IMR-90 (cell line): ENCODE measurements at regions of chr9 and their contacts with region 1.

Region 1: DNA sequence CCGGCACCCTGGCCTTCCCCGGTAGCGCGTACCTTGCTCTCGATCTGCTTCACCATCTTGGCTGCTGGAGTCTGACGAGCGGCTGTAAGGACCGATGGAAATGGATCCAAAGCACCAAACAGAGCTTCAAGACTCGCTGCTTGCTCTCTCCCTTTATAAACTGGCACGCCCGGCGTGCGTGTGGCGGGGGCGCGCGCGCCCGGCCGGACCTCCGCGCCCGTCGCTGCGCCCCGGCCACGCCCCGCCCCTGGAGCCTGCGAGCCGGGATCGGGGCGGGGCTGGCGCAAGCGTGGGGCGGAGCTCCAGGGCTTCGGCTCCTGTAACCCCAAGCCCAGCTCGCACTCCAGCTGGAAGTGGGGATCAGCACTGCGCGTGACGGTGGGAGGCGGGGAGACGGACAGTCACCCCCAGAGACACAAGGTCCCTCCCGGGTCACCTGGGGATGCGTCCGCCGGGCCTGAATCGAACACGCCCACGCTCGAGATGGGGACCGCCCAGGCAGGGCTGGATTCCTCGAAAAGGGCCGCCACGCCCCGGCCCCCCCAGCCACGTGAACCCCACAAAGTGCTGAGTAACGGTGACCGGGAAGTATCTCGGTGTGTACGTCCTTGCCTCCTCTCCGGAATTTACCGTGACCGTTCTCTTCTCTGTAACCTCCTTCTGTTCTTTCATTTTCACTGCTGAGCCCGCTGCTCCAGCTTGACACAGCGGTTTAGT is at the start of gene TXN:
- DNase-seq: peak; percentile 87
- ATAC-seq: peak; percentile 91
- H3K4me3 ChIP-seq: peak within 1 kb of the TSS; percentile 71
- H3K27ac ChIP-seq: peak within 1 kb of the TSS; percentile 91
- H3K4me1 ChIP-seq: peaks cover 12% of the 10 kb centered on the region
- H3K27me3 ChIP-seq: no peaks in the 10 kb centered on the region
- CTCF ChIP-seq: no peak
- POLR2A ChIP-seq: peak; percentile 98
- RAD21 ChIP-seq: no peak
- total RNA-seq, gene TXN: 277 and 588 TPM in 2 replicates

Region 2: GRCh38 chr9:109859433-109859832 is 397.1 kb before region 1 on chr9:
- CTCF ChIA-PET with region 1: no interaction called
- POLR2A ChIA-PET with region 1: no interaction called
- dilution Hi-C with region 1: no loop called
- in situ Hi-C with region 1: no loop called
- intact Hi-C with region 1: no loop called
- DNase-seq: no peak
- ATAC-seq: no peak
- H3K4me3 ChIP-seq: no peak overlapping the region
- H3K27ac ChIP-seq: no peak overlapping the region
- H3K4me1 ChIP-seq: peaks cover 8% of the 10 kb centered on the region
- H3K27me3 ChIP-seq: no peaks in the 10 kb centered on the region
- CTCF ChIP-seq: peak; percentile 30
- POLR2A ChIP-seq: no peak
- RAD21 ChIP-seq: no peak

Region 3: GRCh38 chr9:110058304-110058953 is 198.1 kb before region 1 on chr9:
- CTCF ChIA-PET with region 1: no interaction called
- POLR2A ChIA-PET with region 1: interaction called, 14 read pairs
- dilution Hi-C with region 1: no loop called
- in situ Hi-C with region 1: no loop called
- intact Hi-C with region 1: no loop called
- DNase-seq: peak; percentile 52
- ATAC-seq: peak; percentile 16
- H3K4me3 ChIP-seq: no peak overlapping the region
- H3K27ac ChIP-seq: no peak overlapping the region; the same call in 1 of the 2 replicates
- H3K4me1 ChIP-seq: peaks cover 8% of the 10 kb centered on the region
- H3K27me3 ChIP-seq: no peaks in the 10 kb centered on the region
- CTCF ChIP-seq: peak; percentile 47
- POLR2A ChIP-seq: no peak
- RAD21 ChIP-seq: peak; percentile 68

Region 4: DNA sequence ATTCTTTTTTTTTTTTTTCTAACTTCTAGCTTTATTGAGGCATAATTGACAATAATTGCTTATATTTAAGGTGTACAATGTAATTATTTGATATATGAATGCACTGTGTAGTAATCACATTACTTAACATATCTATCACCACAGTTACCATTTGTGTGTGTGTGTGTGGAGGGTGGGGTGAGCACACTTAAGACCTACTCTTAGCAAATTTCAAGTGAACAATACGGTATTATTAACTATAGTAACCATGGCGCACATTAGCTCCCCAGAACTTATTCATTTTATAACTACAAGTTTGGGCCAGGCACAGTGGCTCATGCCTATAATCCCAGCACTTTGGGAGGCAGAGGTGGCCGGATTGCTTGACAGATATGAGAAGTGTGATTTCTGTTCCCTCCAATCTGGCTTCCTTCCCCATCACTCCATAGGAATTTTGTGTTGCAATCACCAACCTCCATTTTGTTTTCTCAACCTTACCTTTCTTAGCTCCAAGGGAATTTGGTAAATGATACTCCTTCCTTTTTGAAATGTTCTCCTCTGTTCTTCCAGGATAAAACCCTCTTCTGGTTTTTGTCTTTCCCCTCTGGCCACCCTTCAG is 15.2 kb before region 1 on chr9:
- CTCF ChIA-PET with region 1: no interaction called
- POLR2A ChIA-PET with region 1: no interaction called
- dilution Hi-C with region 1: no loop called
- in situ Hi-C with region 1: no loop called
- intact Hi-C with region 1: no loop called
- DNase-seq: peak; percentile 39
- ATAC-seq: peak; percentile 7; the same call in 1 of the 2 replicates
- H3K4me3 ChIP-seq: no peak overlapping the region
- H3K27ac ChIP-seq: no peak overlapping the region
- H3K4me1 ChIP-seq: peaks cover 3% of the 10 kb centered on the region
- H3K27me3 ChIP-seq: no peaks in the 10 kb centered on the region
- CTCF ChIP-seq: no peak
- POLR2A ChIP-seq: no peak
- RAD21 ChIP-seq: no peak

Region 5: DNA sequence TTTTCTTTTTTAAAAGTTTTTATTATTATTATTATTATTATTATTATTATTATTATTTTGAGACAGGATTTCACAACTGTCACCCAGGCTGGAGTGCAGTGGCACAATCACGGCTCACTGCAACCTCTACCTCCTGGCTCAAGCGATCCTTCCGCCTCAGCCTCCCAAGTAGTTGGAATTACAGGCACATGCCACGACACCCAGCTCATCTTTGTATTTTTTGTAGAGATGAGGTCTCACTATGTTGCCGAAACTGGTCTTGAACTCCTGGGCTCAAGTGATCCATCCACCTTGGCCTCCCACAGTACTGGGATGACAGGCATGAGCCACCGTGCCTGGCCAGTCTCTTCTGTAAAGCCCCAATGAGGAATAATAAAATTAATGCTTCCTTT is 30.7 kb after region 1 on chr9:
- CTCF ChIA-PET with region 1: no interaction called
- POLR2A ChIA-PET with region 1: no interaction called
- dilution Hi-C with region 1: no loop called
- in situ Hi-C with region 1: no loop called
- intact Hi-C with region 1: no loop called
- DNase-seq: no peak
- ATAC-seq: no peak
- H3K4me3 ChIP-seq: no peak overlapping the region
- H3K27ac ChIP-seq: no peak overlapping the region
- H3K4me1 ChIP-seq: no peaks in the 10 kb centered on the region
- H3K27me3 ChIP-seq: peaks cover 5% of the 10 kb centered on the region; the same call in 1 of the 2 replicates
- CTCF ChIP-seq: no peak
- POLR2A ChIP-seq: no peak
- RAD21 ChIP-seq: no peak

Region 6: GRCh38 chr9:110351009-110351467 is 94.5 kb after region 1 on chr9:
- CTCF ChIA-PET with region 1: no interaction called
- POLR2A ChIA-PET with region 1: no interaction called
- dilution Hi-C with region 1: no loop called
- in situ Hi-C with region 1: no loop called
- intact Hi-C with region 1: loop called (anchors 5 kb)
- DNase-seq: peak; percentile 80
- ATAC-seq: peak; percentile 88
- H3K4me3 ChIP-seq: no peak overlapping the region
- H3K27ac ChIP-seq: no peak overlapping the region
- H3K4me1 ChIP-seq: peaks cover 5% of the 10 kb centered on the region
- H3K27me3 ChIP-seq: no peaks in the 10 kb centered on the region; the same call in 1 of the 2 replicates
- CTCF ChIP-seq: no peak
- POLR2A ChIP-seq: no peak
- RAD21 ChIP-seq: no peak

Region 7: DNA sequence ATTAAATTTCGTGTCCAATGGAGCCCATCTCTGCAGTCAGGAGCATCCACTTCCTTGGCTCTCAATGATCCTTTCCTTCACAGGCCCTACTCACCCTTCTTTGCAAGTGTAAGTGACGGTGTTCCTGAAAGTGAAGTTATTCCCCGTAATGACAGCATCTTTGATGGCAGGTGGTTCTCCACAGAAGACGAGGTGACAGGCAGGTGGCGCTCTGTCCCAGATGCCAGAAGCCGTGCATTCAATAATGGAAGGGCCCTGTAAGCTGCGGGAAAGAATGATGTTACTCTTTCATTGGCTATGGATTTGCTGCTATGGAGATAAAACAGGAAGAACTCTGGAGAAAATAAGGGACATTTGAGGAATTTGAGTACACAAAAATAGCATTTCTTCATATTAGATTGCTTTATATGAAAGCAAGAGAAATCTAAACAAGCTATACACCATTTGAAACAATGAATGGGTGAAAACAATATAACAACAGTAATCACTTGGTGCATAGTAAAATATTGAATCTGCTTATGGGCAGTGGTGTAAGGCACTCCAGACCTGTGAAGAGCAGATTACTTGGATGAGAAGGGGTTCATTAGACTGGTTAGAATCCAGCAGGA is 171.1 kb after region 1 on chr9:
- CTCF ChIA-PET with region 1: no interaction called
- POLR2A ChIA-PET with region 1: no interaction called
- dilution Hi-C with region 1: no loop called
- in situ Hi-C with region 1: no loop called
- intact Hi-C with region 1: loop called (anchors 5 kb)
- DNase-seq: peak; percentile 28
- ATAC-seq: peak; percentile 12
- H3K4me3 ChIP-seq: no peak overlapping the region
- H3K27ac ChIP-seq: peak overlapping the region; percentile 91; the same call in 1 of the 2 replicates
- H3K4me1 ChIP-seq: peaks cover 8% of the 10 kb centered on the region
- H3K27me3 ChIP-seq: no peaks in the 10 kb centered on the region
- CTCF ChIP-seq: peak; percentile 47
- POLR2A ChIP-seq: no peak
- RAD21 ChIP-seq: peak; percentile 57

Region 8: GRCh38 chr9:110579034-110579861 is 322.7 kb after region 1 on chr9 and contains the start of gene SVEP1:
- CTCF ChIA-PET with region 1: no interaction called
- POLR2A ChIA-PET with region 1: no interaction called
- dilution Hi-C with region 1: no loop called
- in situ Hi-C with region 1: no loop called
- intact Hi-C with region 1: loop called (anchors 10 kb)
- DNase-seq: peak; percentile 77
- ATAC-seq: peak; percentile 61
- H3K4me3 ChIP-seq: peak within 1 kb of the TSS; percentile 51
- H3K27ac ChIP-seq: peak within 1 kb of the TSS; percentile 85
- H3K4me1 ChIP-seq: peaks cover 15% of the 10 kb centered on the region
- H3K27me3 ChIP-seq: no peaks in the 10 kb centered on the region
- CTCF ChIP-seq: no peak
- POLR2A ChIP-seq: peak; percentile 55
- RAD21 ChIP-seq: no peak
- total RNA-seq, gene SVEP1: 13.1 and 16.7 TPM in 2 replicates